Activated T-helper 1 cell treated with anti-CD3 and anti-CD28 coated beads, Interleukin-12 subunit alpha, Interleukin-12 subunit beta, Interleukin-2, Interleukin-4 antibody, amounts not matched to agents 30 ng/mL and 10 ng/mL and 1 ng/mL, durations not matched to agents 14 hours and 24 hours and 36 hours (primary cell): ENCODE measurements at regions of chr12 and their contacts with region 1.

Region 1: DNA sequence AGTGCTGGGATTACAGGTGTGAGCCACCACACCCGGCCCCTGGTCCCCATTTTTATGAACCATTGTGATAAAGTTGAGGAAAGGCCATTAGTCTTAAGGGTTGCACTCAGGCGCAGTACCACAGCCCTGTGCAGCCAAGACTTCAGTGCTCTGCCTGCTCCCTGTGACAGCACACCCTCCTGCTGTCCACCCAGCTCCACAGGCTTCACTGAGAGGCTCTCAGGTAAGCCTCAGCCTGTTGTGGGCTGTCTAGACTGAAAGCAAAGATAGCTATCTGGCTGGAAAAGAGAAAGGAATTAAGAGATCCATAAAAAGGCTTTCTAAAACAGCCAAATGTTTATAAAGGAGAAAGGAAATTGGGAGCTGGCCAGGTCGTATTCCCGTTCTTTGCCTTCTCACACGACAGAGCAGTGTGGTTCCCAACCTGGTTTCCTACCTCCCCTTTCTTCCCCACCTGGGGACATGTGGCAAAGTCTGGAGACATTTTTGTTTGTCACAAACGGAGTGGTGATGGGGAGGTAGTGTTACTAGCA is 19.1 kb upstream of the DNM1L start:
- DNase-seq: no peak
- H3K4me3 Mint-ChIP-seq: no peak overlapping the region
- H3K27ac Mint-ChIP-seq: no peak overlapping the region
- H3K4me1 Mint-ChIP-seq: peaks cover 10% of the 10 kb centered on the region
- H3K27me3 Mint-ChIP-seq: peaks cover 3% of the 10 kb centered on the region

Region 2: GRCh38 chr12:32365473-32366064 is 294.4 kb before region 1 on chr12:
- intact Hi-C with region 1: loop called (anchors 1 kb)
- DNase-seq: peak; percentile 14
- H3K4me3 Mint-ChIP-seq: no peak overlapping the region
- H3K27ac Mint-ChIP-seq: no peak overlapping the region
- H3K4me1 Mint-ChIP-seq: no peaks in the 10 kb centered on the region
- H3K27me3 Mint-ChIP-seq: no peaks in the 10 kb centered on the region

Region 3: DNA sequence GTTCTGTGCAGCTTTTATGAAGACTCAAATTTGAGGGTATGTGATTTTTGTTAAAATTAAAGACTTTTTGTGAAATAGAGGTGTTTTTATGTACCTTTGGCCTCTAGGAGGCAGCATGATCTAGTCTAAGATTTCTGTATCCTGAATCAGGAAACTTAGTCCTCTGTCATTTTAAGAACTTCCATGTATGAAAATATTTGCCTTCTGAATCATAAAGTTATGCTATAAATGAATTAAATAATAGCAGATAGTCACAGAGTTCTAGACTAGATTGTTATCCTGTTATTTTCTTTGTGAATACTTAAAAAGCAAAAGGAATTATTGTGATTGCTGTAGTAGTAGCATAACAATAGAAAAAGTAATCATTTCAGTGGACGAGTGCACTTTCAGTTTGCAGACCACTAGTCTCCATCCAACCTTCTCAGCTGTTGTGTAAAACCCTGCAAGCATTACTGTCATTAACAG is 204.3 kb before region 1 on chr12:
- intact Hi-C with region 1: loop called (anchors 1 kb)
- DNase-seq: no peak
- H3K4me3 Mint-ChIP-seq: no peak overlapping the region
- H3K27ac Mint-ChIP-seq: no peak overlapping the region
- H3K4me1 Mint-ChIP-seq: peaks cover 5% of the 10 kb centered on the region
- H3K27me3 Mint-ChIP-seq: peaks cover 11% of the 10 kb centered on the region

Region 4: GRCh38 chr12:32558903-32559302 is 101.1 kb before region 1 on chr12:
- intact Hi-C with region 1: loop called (anchors 5 kb)
- DNase-seq: no peak
- H3K4me3 Mint-ChIP-seq: no peak overlapping the region
- H3K27ac Mint-ChIP-seq: no peak overlapping the region
- H3K4me1 Mint-ChIP-seq: peaks cover 33% of the 10 kb centered on the region
- H3K27me3 Mint-ChIP-seq: peaks cover 2% of the 10 kb centered on the region

Region 5: DNA sequence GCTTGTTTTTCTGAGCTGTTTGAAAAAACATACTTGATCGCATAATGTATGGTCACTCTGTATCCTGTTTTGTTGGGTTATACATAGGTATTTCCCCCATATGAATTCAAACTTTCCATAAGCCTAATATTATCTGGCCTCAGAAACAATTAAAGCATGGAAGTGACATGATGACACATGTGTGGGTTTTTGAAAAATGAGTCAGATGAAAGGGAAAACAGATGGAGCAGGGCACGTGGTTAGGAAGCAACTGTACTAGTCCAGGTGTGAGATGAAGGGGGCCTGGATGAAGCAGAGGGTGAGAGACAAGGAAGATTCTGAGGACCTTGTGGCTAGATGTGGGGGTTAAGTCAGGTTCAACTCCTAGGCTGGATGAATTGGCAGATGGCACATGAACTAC is 73.6 kb before region 1 on chr12:
- intact Hi-C with region 1: loop called (anchors 5 kb)
- DNase-seq: no peak
- H3K4me3 Mint-ChIP-seq: peak overlapping the region; percentile 15
- H3K27ac Mint-ChIP-seq: peak overlapping the region; percentile 82
- H3K4me1 Mint-ChIP-seq: peaks cover 65% of the 10 kb centered on the region
- H3K27me3 Mint-ChIP-seq: no peaks in the 10 kb centered on the region

Region 6: GRCh38 chr12:32603858-32604257 is 56.1 kb before region 1 on chr12:
- intact Hi-C with region 1: loop called (anchors 1 kb)
- DNase-seq: peak; percentile 56
- H3K4me3 Mint-ChIP-seq: no peak overlapping the region
- H3K27ac Mint-ChIP-seq: peak overlapping the region; percentile 65
- H3K4me1 Mint-ChIP-seq: peaks cover 18% of the 10 kb centered on the region
- H3K27me3 Mint-ChIP-seq: no peaks in the 10 kb centered on the region

Region 7: DNA sequence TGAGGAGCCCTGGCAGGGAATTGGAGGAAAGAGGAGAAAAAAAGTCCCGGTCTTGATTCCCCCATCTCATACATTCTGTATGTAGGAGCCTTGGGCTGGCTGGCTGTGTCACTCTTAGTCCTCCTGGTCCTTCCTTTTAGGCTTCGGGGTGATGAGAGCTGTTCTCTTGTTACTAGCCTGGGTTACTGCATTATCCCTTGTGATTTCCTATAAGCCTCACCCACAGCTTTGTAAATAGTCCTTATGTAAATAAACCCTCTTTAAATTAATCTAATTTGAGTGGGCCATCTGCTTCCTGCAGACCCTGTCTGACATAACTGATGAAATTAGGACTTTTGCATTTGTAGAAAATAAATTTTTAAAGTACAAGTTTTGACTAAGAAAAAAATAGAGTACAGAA is 38.3 kb after region 1 on chr12:
- intact Hi-C with region 1: no loop called
- DNase-seq: no peak
- H3K4me3 Mint-ChIP-seq: no peak overlapping the region
- H3K27ac Mint-ChIP-seq: no peak overlapping the region
- H3K4me1 Mint-ChIP-seq: peaks cover 20% of the 10 kb centered on the region
- H3K27me3 Mint-ChIP-seq: no peaks in the 10 kb centered on the region

Region 8: DNA sequence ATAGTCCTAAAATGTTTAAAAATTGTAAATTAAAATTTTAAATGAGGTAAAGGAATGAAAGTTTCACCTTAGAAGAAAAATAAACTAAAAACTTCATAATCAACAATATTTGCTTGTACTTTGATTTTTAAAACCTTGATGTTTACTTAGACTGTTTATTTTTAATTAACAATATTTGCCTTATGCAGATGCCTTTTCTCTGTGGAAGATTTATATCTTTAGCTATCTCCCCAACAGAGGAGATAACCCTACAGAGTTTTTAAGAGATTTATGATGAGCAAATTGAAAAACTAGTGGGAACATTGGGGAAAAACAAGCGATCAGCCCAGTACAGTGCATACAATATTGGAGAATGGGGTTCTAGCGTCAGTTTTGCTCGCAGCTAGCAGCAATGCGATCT is 363.8 kb after region 1 on chr12:
- intact Hi-C with region 1: no loop called
- DNase-seq: no peak
- H3K4me3 Mint-ChIP-seq: no peak overlapping the region
- H3K27ac Mint-ChIP-seq: no peak overlapping the region
- H3K4me1 Mint-ChIP-seq: no peaks in the 10 kb centered on the region
- H3K27me3 Mint-ChIP-seq: peaks cover 2% of the 10 kb centered on the region